CD4-positive, alpha-beta T cell (primary cell): ENCODE measurements at regions of chr20 and their contacts with region 1.

Region 1: DNA sequence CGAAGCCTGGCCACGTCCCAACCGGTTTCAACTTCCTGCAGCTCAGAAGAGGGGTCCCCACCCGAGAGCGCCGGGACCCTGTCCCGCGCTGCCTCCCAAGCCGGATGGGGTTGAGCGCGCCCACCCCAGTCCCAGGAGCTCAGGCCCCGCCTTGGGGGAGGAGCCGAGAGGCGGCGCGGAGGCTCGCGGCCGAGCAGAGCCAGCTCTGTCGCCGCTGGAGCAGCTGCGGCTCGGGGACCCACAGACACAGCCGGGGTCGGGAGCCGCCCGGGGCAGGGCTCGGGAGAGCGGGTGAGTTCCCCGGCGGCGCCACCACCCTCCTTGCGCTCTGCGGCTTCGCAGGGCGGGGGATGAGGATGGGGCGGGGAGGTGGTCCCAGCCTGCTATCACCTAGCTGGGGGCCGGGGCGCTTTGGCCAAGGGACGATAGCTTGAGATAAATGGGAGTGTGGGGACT is at the start of gene PPP1R16B:
- DNase-seq: peak; percentile 56 to 88 (median 73)
- ATAC-seq: peak; percentile 59
- H3K4me3 ChIP-seq: peak within 1 kb of the TSS; percentile 98
- H3K4me3 Mint-ChIP-seq: peak within 1 kb of the TSS; percentile 89
- H3K27ac ChIP-seq: peak within 1 kb of the TSS; percentile 96 to 100
- H3K27ac Mint-ChIP-seq: peak within 1 kb of the TSS; percentile 97
- H3K4me1 ChIP-seq: peaks cover 57% of the 10 kb centered on the region
- H3K4me1 Mint-ChIP-seq: peaks cover 55% of the 10 kb centered on the region
- H3K27me3 ChIP-seq: no peaks in the 10 kb centered on the region
- H3K27me3 Mint-ChIP-seq: no peaks in the 10 kb centered on the region
- CTCF ChIP-seq: no peak
- total RNA-seq, gene PPP1R16B: 87.6 to 91.1 TPM

Region 2: DNA sequence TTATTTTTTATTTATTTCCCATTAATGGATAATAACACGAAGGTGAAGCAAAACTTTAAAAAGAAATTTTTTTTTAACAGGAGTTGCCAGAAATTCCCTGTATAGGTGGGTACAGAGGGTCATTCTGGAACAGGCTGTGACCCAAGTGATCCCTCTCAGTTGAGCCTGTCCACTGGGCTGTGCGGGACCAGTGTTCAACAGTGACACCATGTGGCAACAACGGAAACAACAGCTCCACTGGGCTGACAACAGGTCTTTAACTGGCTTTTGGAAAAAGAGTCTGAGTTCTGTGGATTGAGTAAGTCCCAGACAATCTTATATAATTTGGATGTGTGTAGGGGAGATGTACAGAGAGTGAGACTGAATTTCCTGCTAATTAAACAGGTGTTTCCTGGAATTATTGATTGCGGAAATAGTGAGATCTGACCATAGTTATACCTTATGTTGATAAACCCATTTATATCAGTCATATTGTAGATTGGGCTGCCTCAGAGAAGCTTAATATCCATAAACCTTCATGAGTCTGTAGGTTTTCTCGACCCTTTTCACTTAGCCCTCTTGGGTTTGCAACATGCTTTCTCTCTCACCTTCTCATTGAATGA is 562.6 kb before region 1 on chr20:
- CTCF ChIA-PET with region 1: no interaction called
- POLR2A ChIA-PET with region 1: no interaction called
- intact Hi-C with region 1: no loop called
- DNase-seq: peak in 1 of 14 experiments; percentile 9
- ATAC-seq: no peak
- H3K4me3 ChIP-seq: no peak overlapping the region
- H3K4me3 Mint-ChIP-seq: no peak overlapping the region
- H3K27ac ChIP-seq: no peak overlapping the region
- H3K27ac Mint-ChIP-seq: no peak overlapping the region
- H3K4me1 ChIP-seq: no peaks in the 10 kb centered on the region
- H3K4me1 Mint-ChIP-seq: no peaks in the 10 kb centered on the region
- H3K27me3 ChIP-seq: peaks cover 0 to 16% of the 10 kb centered on the region in 2 experiments
- H3K27me3 Mint-ChIP-seq: peaks cover 37% of the 10 kb centered on the region
- CTCF ChIP-seq: no peak

Region 3: GRCh38 chr20:38818113-38819065 is 12.9 kb after region 1 on chr20:
- CTCF ChIA-PET with region 1: no interaction called
- POLR2A ChIA-PET with region 1: interaction called, 12 read pairs
- intact Hi-C with region 1: no loop called
- DNase-seq: no peak
- ATAC-seq: no peak
- H3K4me3 ChIP-seq: no peak overlapping the region
- H3K4me3 Mint-ChIP-seq: no peak overlapping the region
- H3K27ac ChIP-seq: no peak overlapping the region
- H3K27ac Mint-ChIP-seq: peak overlapping the region; percentile 9
- H3K4me1 ChIP-seq: peaks cover 31% of the 10 kb centered on the region
- H3K4me1 Mint-ChIP-seq: peaks cover 73% of the 10 kb centered on the region
- H3K27me3 ChIP-seq: no peaks in the 10 kb centered on the region
- H3K27me3 Mint-ChIP-seq: no peaks in the 10 kb centered on the region
- CTCF ChIP-seq: no peak

Region 4: GRCh38 chr20:38842558-38842981 is 37.0 kb after region 1 on chr20:
- CTCF ChIA-PET with region 1: interaction called, 7 read pairs
- POLR2A ChIA-PET with region 1: interaction called, 92 read pairs
- intact Hi-C with region 1: loop called (anchors 2 kb)
- DNase-seq: peak in 9 of 14 experiments; percentile 27 to 78 (median 46)
- ATAC-seq: peak; percentile 23
- H3K4me3 ChIP-seq: peak overlapping the region; percentile 25
- H3K4me3 Mint-ChIP-seq: peak overlapping the region; percentile 78
- H3K27ac ChIP-seq: peak overlapping the region; percentile 63 to 94
- H3K27ac Mint-ChIP-seq: peak overlapping the region; percentile 97
- H3K4me1 ChIP-seq: peaks cover 63% of the 10 kb centered on the region
- H3K4me1 Mint-ChIP-seq: peaks cover 91% of the 10 kb centered on the region
- H3K27me3 ChIP-seq: no peaks in the 10 kb centered on the region
- H3K27me3 Mint-ChIP-seq: no peaks in the 10 kb centered on the region
- CTCF ChIP-seq: no peak

Region 5: DNA sequence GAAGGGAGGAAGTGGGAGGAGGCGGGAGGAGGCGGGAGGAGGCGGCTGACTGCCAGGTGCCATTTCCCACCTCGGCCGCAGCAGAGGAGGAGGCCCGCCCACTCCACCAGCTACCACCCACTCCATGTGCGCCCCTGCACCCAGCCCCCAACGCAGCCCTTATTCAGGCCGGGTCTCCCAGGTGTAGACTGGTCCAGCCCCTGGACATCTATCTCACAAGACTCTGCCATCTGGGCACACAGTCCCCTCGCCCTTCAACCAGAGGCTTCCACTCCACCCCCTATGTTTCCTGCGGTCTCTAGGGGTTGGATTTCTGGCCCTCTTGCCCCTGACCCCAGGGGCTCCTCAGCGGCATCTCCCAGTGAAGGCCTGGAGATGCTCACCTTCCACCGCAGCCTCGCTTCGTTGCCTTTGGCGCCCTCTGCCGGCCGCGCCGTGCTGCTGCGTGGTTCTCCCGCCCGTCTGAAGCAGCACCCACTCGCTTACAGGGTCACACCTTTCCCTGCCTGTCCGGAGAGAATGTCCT is 88.1 kb after region 1 on chr20:
- CTCF ChIA-PET with region 1: interaction called, 4 read pairs
- POLR2A ChIA-PET with region 1: interaction called, 15 read pairs
- intact Hi-C with region 1: loop called (anchors 1 to 2 kb)
- DNase-seq: peak; percentile 61 to 90 (median 78)
- ATAC-seq: peak; percentile 88
- H3K4me3 ChIP-seq: peak overlapping the region; percentile 10
- H3K4me3 Mint-ChIP-seq: peak overlapping the region; percentile 5
- H3K27ac ChIP-seq: peak overlapping the region; percentile 15 to 59
- H3K27ac Mint-ChIP-seq: peak overlapping the region; percentile 77
- H3K4me1 ChIP-seq: peaks cover 24% of the 10 kb centered on the region
- H3K4me1 Mint-ChIP-seq: peaks cover 33% of the 10 kb centered on the region
- H3K27me3 ChIP-seq: no peaks in the 10 kb centered on the region
- H3K27me3 Mint-ChIP-seq: no peaks in the 10 kb centered on the region
- CTCF ChIP-seq: peak; percentile 96